Sciatic nerve (tissue), 2 donors: ENCODE measurements at regions of chr19 and their contacts with region 1.

Region 1: GRCh38 chr19:17346109-17346671 is 8.8 kb downstream of the GTPBP3 start:
- DNase-seq: peak; percentile 87
- ATAC-seq: peak; percentile 87

Region 2: GRCh38 chr19:17380431-17381138 is 34.4 kb after region 1 on chr19:
- intact Hi-C with region 1: loop called (anchors 5 kb)
- DNase-seq: no peak
- ATAC-seq: no peak